ENCODE measurements at regions of chr16 and their contacts with region 1.

Region 1: GRCh38 chr16:3587547-3588110 is 10.4 kb upstream of the NLRC3 start:
- DNase-seq: no peak

Region 2: DNA sequence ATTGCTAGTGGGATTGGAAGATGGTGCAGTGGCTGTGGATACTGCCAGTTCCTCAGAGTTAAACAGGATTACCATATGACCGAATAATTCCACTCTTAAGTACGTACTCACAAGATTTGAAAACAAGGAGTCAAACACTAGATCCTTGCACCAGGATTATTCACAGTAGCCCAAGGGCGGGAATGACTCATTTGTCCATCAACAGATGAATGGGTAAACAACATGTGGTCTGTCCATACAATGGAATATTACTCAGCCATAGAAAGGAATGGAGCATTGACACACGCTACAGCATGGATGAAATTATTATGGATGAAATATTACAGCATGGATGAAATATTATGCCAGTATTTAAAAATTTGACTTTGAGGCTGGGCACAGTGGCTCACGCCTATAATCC is 1890.8 kb before region 1 on chr16:
- intact Hi-C with region 1: loop called in 1 of 2 experiments (anchors 5 kb)
- DNase-seq: no peak

Region 3: GRCh38 chr16:3520413-3520812 is 67.2 kb before region 1 on chr16:
- intact Hi-C with region 1: no loop called
- DNase-seq: no peak